Activated CD8-positive, alpha-beta T cell treated with anti-CD3 and anti-CD28 coated beads, Interleukin-2, amount 10 ng/mL, durations not matched to agents 7 days and 5 days (primary cell): ENCODE measurements at regions of chr5 and their contacts with region 1.

Region 1: GRCh38 chr5:175696139-175696854 is 38.4 kb downstream of the HRH2 start:
- DNase-seq: peak; percentile 85
- ATAC-seq: peak; percentile 87
- H3K4me3 Mint-ChIP-seq: peak overlapping the region; percentile 49
- H3K27ac Mint-ChIP-seq: peak overlapping the region; percentile 73
- H3K4me1 Mint-ChIP-seq: peaks cover 50% of the 10 kb centered on the region
- H3K27me3 Mint-ChIP-seq: no peaks in the 10 kb centered on the region

Region 2: GRCh38 chr5:175657593-175658271 is 38.6 kb before region 1 on chr5 and contains the start of gene HRH2:
- CTCF ChIA-PET with region 1: interaction called, 11 read pairs
- POLR2A ChIA-PET with region 1: no interaction called
- DNase-seq: peak; percentile 78
- ATAC-seq: peak; percentile 54
- H3K4me3 Mint-ChIP-seq: peak within 1 kb of the TSS; percentile 94
- H3K27ac Mint-ChIP-seq: peak within 1 kb of the TSS; percentile 90
- H3K4me1 Mint-ChIP-seq: peaks cover 90% of the 10 kb centered on the region
- H3K27me3 Mint-ChIP-seq: no peaks in the 10 kb centered on the region
- total RNA-seq, gene HRH2: 26.9 to 27.5 TPM

Region 3: GRCh38 chr5:175729829-175730277 is 33.6 kb after region 1 on chr5:
- CTCF ChIA-PET with region 1: interaction called, 20 read pairs
- POLR2A ChIA-PET with region 1: no interaction called
- DNase-seq: peak; percentile 92
- ATAC-seq: peak; percentile 96
- H3K4me3 Mint-ChIP-seq: no peak overlapping the region
- H3K27ac Mint-ChIP-seq: no peak overlapping the region
- H3K4me1 Mint-ChIP-seq: peaks cover 6% of the 10 kb centered on the region
- H3K27me3 Mint-ChIP-seq: peaks cover 11% of the 10 kb centered on the region

Region 4: DNA sequence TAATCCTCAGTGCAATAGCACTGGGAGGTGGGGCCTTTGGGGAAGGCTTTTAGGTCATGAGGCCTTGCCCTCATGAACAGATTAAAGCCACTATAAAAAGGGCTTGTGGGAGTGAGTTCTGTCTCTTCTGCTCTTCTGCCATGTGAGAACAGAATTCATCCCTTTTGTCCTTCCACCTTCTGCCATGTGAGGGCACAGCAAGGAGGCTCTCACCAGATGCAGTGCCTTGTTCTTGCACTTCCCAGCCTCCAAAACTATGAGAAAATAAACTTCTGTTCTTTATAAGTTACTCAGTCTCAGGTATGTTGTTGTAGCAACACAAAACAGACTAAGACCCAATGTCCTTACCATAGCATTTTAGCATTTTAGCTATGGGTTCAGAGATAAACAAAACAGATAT is 93.4 kb after region 1 on chr5:
- CTCF ChIA-PET with region 1: no interaction called
- POLR2A ChIA-PET with region 1: no interaction called
- DNase-seq: no peak
- ATAC-seq: no peak
- H3K4me3 Mint-ChIP-seq: no peak overlapping the region
- H3K27ac Mint-ChIP-seq: no peak overlapping the region
- H3K4me1 Mint-ChIP-seq: no peaks in the 10 kb centered on the region
- H3K27me3 Mint-ChIP-seq: peaks cover 16% of the 10 kb centered on the region